ENCODE measurements at regions of chr6 and their contacts with region 1.

Region 1: GRCh38 chr6:165662749-165663282 is at the start of gene PDE10A:
- DNase-seq: peak; percentile 85
- total RNA-seq, gene PDE10A: 25.1 TPM

Region 2: DNA sequence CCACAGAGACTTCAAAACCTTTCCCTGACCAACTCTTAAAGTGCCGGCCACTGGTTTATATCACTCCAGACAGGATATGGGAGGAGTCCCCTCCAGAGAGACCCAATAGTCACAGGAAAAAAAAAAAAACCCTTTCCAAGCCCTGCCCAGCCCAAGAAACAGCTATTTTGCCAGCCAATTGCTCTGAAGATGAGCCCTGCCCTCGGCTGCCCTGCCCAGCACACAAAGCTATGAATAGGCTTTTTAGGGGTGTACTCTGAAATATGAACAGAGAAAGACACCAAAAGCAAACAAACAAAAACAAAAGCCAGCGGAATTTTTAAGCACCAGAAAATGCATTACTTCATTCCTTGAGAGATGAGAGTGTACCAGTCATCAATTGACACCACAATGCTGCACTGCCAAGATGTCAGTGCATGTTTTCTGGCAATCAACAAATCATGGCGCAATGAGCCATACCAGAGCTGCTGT is 628.5 kb before region 1 on chr6:
- intact Hi-C with region 1: no loop called
- DNase-seq: no peak

Region 3: GRCh38 chr6:165321555-165322145 is 341.2 kb before region 1 on chr6:
- intact Hi-C with region 1: no loop called
- DNase-seq: no peak

Region 4: DNA sequence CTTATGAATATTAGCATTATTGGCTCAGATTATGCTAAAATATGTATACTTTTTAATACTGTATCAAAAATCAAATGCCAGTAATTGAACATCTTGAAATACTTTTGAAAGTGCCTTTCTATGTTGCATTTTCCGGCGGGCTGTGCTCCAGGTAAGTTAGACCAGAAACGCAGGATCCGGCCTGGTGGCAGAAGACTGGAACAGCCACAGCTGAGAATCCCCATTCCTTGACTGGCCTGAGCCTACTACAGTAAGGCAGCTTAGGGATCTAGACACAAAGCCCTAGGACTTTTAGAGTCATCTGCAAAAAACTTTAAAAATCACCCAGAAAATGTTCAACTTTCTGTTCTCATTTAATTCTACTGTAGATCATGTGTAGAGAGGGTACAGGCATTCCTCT is 214.6 kb before region 1 on chr6:
- intact Hi-C with region 1: loop called (anchors 5 kb)
- DNase-seq: no peak

Region 5: DNA sequence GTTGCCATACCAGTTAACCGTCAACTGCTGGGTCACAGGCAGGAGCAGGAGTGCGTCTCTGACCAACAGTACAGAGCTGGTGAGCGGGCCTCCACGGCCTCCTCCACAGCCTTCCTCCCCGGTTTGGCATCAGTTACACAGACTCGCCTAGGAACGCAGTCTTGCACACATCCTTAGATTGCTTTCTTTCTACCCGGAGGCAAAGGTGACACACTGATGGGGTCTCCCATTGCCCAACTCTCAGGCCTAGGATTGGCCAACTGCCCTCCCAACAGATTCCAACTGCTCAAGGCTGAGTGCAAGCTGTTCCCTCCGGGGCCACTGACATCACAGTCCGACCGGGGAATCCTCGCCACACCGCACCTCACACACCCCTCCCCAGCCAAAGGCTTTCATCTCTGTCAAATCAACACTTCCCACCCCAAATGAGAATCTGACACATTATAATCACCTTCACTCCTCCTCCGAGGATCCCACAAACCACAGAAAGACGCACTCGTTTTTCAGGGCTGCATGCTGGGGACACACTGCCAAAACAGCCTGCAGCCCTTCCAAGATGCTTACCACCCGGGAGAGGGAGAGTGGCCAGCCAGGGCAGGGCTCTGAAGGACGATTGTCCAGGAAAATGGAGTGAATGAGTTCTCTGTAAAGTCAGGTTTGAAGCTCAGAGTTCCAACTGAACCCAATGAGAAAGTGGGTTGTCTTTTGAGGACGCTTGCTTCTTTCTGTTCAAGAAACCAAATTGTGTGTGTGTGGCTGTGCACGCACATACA is 62.9 kb before region 1 on chr6:
- intact Hi-C with region 1: no loop called
- DNase-seq: no peak

Region 6: GRCh38 chr6:165615636-165616035 is 47.2 kb before region 1 on chr6:
- intact Hi-C with region 1: loop called (anchors 5 kb)
- DNase-seq: no peak

Region 7: GRCh38 chr6:165704045-165704748 is 41.4 kb after region 1 on chr6:
- intact Hi-C with region 1: loop called (anchors 5 kb)
- DNase-seq: no peak

Region 8: DNA sequence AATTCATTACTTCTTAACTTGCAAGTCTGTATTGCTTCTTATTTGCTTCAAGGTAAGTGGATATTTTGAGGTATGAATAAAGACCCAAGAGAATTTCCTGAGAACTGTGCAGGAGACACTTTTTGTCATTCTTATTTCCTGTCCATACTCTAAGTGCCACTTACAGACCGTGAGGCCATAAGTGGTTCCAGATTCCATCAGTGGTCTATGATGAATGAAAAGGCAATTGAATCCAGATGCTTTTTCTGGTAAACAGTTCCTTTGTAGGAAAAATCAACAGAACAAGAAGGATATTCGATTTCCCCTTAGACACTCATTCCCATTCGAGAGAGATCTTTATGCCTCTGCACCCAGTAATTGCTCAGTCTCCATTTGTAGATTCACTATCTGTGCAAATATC is 58.5 kb after region 1 on chr6:
- intact Hi-C with region 1: loop called (anchors 5 kb)
- DNase-seq: no peak

Region 9: DNA sequence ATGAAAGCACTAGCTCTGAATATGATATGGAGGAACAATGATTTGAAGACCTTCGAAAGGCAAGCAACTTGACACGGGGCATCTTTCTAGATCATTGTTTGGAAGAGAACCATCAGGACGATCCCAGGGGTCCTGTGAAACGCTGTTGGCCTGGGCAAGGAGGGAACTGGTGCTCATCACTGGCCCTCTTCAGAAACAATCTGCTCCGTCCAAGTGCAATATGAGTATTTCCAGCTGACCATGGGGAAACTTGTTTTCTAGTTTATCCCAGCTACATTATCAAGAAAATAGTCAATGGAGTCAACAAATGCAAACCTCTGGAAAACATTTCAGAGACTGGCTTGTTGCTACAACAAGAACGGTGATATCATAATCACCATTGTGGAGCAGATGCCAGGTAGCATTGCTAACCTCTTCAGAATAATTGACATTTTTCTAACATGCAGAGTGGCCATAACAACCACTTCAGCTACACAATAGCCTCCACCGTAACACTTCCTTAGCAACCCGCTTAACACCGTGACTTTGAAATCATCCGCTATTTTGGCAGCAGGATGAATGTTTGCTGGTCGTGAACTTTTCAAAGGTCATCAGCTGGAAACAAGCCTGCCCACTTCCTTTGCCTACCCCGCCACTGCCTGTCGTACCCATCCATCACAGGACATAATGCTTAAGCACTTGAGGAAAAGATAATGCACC is 112.2 kb after region 1 on chr6:
- intact Hi-C with region 1: loop called (anchors 5 kb)
- DNase-seq: no peak

Region 10: GRCh38 chr6:165850434-165851019 is 187.7 kb after region 1 on chr6:
- intact Hi-C with region 1: loop called (anchors 5 kb)
- DNase-seq: peak; percentile 86